ENCODE measurements at regions of chr9 and their contacts with region 1.

Region 1: GRCh38 chr9:77841739-77842386 is 189.7 kb downstream of the GNAQ start:
- DNase-seq: peak; percentile 16
- ATAC-seq: peak; percentile 95
- H3K4me3 ChIP-seq: no peak overlapping the region
- H3K27ac ChIP-seq: no peak overlapping the region
- H3K4me1 ChIP-seq: peaks cover 8% of the 10 kb centered on the region; the same call in 1 of the 2 replicates
- H3K27me3 ChIP-seq: no peaks in the 10 kb centered on the region
- CTCF ChIP-seq: peak; percentile 1 to 16 (median 8); a peak in 2 of 6 replicates
- EP300 ChIP-seq: no peak; a peak in 1 of 4 replicates
- POLR2A ChIP-seq: no peak
- RAD21 ChIP-seq: peak; percentile 48

Region 2: DNA sequence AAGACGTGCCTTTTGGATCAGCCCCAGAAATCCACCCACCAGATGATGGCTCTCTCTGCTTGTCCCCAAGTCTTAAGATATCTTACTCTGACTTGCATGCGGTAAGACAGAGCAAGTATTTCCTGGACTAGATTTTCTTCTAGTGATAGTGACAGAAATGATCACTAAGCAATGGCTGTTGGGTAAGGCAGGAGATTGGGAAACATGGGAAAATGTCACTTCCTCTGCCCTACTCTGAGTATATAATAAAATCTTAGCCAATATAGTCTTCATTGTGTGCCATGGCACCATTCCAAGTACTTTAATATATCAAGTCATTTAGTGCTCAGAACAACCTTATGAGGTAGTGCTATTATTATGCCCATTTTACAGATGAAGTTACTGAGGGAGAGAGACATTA is 162.8 kb before region 1 on chr9:
- CTCF ChIA-PET with region 1: no interaction called
- POLR2A ChIA-PET with region 1: no interaction called
- RAD21 ChIA-PET with region 1: no interaction called
- SMC1A ChIA-PET with region 1: no interaction called
- in situ Hi-C with region 1: no loop called
- intact Hi-C with region 1: no loop called
- DNase-seq: no peak
- ATAC-seq: no peak
- H3K4me3 ChIP-seq: no peak overlapping the region
- H3K27ac ChIP-seq: no peak overlapping the region
- H3K4me1 ChIP-seq: no peaks in the 10 kb centered on the region
- H3K27me3 ChIP-seq: no peaks in the 10 kb centered on the region; a peak in 1 of 4 replicates
- CTCF ChIP-seq: no peak
- EP300 ChIP-seq: no peak
- POLR2A ChIP-seq: no peak
- RAD21 ChIP-seq: no peak

Region 3: GRCh38 chr9:77751341-77752091 is 90.3 kb before region 1 on chr9:
- CTCF ChIA-PET with region 1: interaction called, 6 read pairs
- POLR2A ChIA-PET with region 1: no interaction called
- RAD21 ChIA-PET with region 1: interaction called, 7 read pairs
- SMC1A ChIA-PET with region 1: interaction called, 13 read pairs
- in situ Hi-C with region 1: no loop called
- intact Hi-C with region 1: no loop called
- DNase-seq: no peak
- ATAC-seq: peak; percentile 76
- H3K4me3 ChIP-seq: no peak overlapping the region
- H3K27ac ChIP-seq: no peak overlapping the region
- H3K4me1 ChIP-seq: no peaks in the 10 kb centered on the region
- H3K27me3 ChIP-seq: no peaks in the 10 kb centered on the region
- CTCF ChIP-seq: peak; percentile 34 to 53 (median 34); a peak in 4 of 6 replicates
- EP300 ChIP-seq: no peak
- POLR2A ChIP-seq: no peak
- RAD21 ChIP-seq: peak; percentile 51

Region 4: DNA sequence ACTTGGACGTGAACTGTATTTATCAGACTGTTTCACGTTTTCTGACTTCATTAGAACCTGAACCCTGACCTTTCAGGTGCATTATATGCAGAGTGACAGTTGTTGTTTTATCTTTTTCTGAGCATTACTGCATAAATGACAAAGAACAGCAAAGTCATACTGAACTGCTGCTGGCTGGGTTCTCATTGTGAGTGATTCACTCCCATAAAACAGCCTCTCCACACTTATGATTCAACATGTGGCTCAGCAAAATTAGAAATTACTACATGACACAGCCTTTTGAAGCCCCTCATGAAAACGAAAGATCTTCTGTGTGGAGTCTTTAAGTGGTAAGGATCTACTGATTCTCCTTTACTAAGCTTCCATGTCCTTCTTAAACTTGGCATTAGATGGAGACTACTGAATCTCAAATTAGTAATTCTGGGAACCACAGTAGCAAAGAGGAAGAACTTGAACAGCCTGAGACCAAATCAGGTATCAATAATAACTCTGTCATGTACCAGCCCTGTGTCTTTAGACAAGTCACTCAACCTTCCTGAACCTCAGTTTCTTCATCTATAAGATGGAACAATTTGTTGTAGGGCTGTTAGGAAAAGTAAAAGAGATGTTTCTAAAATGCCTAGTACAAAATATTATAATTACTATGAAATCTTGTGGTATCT is 21.4 kb before region 1 on chr9:
- CTCF ChIA-PET with region 1: interaction called, 16 read pairs
- POLR2A ChIA-PET with region 1: interaction called, 3 read pairs
- RAD21 ChIA-PET with region 1: interaction called, 7 read pairs
- SMC1A ChIA-PET with region 1: interaction called, 10 read pairs
- in situ Hi-C with region 1: no loop called
- intact Hi-C with region 1: no loop called
- DNase-seq: no peak
- ATAC-seq: peak; percentile 35
- H3K4me3 ChIP-seq: no peak overlapping the region
- H3K27ac ChIP-seq: no peak overlapping the region
- H3K4me1 ChIP-seq: no peaks in the 10 kb centered on the region
- H3K27me3 ChIP-seq: no peaks in the 10 kb centered on the region
- CTCF ChIP-seq: no peak
- EP300 ChIP-seq: no peak
- POLR2A ChIP-seq: no peak
- RAD21 ChIP-seq: no peak

Region 5: GRCh38 chr9:77851882-77852595 is 10.2 kb after region 1 on chr9:
- CTCF ChIA-PET with region 1: interaction called, 9 read pairs
- POLR2A ChIA-PET with region 1: interaction called, 6 read pairs
- RAD21 ChIA-PET with region 1: interaction called, 10 read pairs
- SMC1A ChIA-PET with region 1: interaction called, 7 read pairs
- in situ Hi-C with region 1: no loop called
- intact Hi-C with region 1: no loop called
- DNase-seq: no peak
- ATAC-seq: peak; percentile 11
- H3K4me3 ChIP-seq: no peak overlapping the region
- H3K27ac ChIP-seq: no peak overlapping the region
- H3K4me1 ChIP-seq: no peaks in the 10 kb centered on the region
- H3K27me3 ChIP-seq: no peaks in the 10 kb centered on the region; a peak in 1 of 4 replicates
- CTCF ChIP-seq: no peak
- EP300 ChIP-seq: no peak
- POLR2A ChIP-seq: no peak
- RAD21 ChIP-seq: no peak

Region 6: DNA sequence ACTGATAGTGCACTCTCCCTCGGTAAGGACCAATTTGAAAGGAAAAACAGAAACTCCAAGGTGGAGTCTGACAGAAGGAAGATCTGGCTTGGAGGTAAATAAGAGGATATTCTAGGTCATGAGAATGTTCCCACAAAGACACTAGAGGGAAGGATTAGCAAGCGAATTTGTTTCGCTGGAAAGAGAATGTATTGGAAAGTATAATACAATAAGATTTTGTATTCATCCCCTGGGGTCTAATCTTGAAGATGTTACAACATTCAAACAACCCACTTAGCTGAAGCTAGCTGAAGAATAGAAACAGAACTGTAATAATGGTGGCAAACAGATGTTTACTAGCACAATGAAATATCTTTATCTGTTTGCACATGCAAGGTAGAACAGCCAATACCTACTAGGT is 31.0 kb after region 1 on chr9:
- CTCF ChIA-PET with region 1: no interaction called
- POLR2A ChIA-PET with region 1: no interaction called
- RAD21 ChIA-PET with region 1: no interaction called
- SMC1A ChIA-PET with region 1: no interaction called
- in situ Hi-C with region 1: no loop called
- intact Hi-C with region 1: no loop called
- DNase-seq: no peak
- ATAC-seq: no peak
- H3K4me3 ChIP-seq: no peak overlapping the region
- H3K27ac ChIP-seq: no peak overlapping the region
- H3K4me1 ChIP-seq: no peaks in the 10 kb centered on the region
- H3K27me3 ChIP-seq: no peaks in the 10 kb centered on the region
- CTCF ChIP-seq: no peak
- EP300 ChIP-seq: no peak
- POLR2A ChIP-seq: no peak
- RAD21 ChIP-seq: no peak

Region 7: GRCh38 chr9:78023003-78023741 is 181.3 kb after region 1 on chr9:
- CTCF ChIA-PET with region 1: no interaction called
- POLR2A ChIA-PET with region 1: no interaction called
- RAD21 ChIA-PET with region 1: no interaction called
- SMC1A ChIA-PET with region 1: no interaction called
- in situ Hi-C with region 1: no loop called
- intact Hi-C with region 1: no loop called
- DNase-seq: no peak
- ATAC-seq: peak; percentile 54
- H3K4me3 ChIP-seq: no peak overlapping the region
- H3K27ac ChIP-seq: no peak overlapping the region
- H3K4me1 ChIP-seq: no peaks in the 10 kb centered on the region
- H3K27me3 ChIP-seq: no peaks in the 10 kb centered on the region; a peak in 2 of 4 replicates
- CTCF ChIP-seq: no peak
- EP300 ChIP-seq: 0 out of 4 replicates have a peak, but pooled peaks of 1 of the 2 experiments have one; percentile 11
- POLR2A ChIP-seq: no peak
- RAD21 ChIP-seq: no peak

Region 8: DNA sequence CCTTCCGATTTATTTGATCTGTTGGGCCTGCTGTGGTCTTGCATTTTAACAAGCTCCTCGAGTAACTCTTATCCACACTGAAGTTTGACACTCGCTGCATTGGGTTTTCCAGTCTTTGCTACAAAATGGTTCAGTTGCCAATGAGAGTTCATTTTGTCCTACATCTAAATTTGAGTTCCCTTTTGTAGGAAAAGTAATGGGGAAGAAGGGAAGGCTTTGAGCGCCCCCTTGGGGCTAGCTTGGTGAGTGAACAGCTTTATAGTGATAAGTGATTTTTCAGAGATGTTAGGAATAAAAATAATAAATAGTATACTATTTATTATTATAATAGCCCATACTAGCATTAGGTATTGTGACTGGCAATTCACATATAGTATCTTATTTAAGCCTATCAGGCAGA is 279.6 kb after region 1 on chr9:
- CTCF ChIA-PET with region 1: interaction called, 4 read pairs
- POLR2A ChIA-PET with region 1: no interaction called
- RAD21 ChIA-PET with region 1: interaction called, 4 read pairs
- SMC1A ChIA-PET with region 1: interaction called, 6 read pairs
- in situ Hi-C with region 1: no loop called
- intact Hi-C with region 1: loop called (anchors 10 kb)
- DNase-seq: no peak
- ATAC-seq: peak; percentile 22; the same call in 1 of the 3 replicates
- H3K4me3 ChIP-seq: no peak overlapping the region
- H3K27ac ChIP-seq: no peak overlapping the region
- H3K4me1 ChIP-seq: peaks cover 7% of the 10 kb centered on the region; the same call in 1 of the 2 replicates
- H3K27me3 ChIP-seq: no peaks in the 10 kb centered on the region
- CTCF ChIP-seq: peak; percentile 49 to 57 (median 53)
- EP300 ChIP-seq: no peak
- POLR2A ChIP-seq: no peak
- RAD21 ChIP-seq: peak; percentile 70